ENCODE measurements at regions of chr9 and their contacts with region 1.

Region 1: DNA sequence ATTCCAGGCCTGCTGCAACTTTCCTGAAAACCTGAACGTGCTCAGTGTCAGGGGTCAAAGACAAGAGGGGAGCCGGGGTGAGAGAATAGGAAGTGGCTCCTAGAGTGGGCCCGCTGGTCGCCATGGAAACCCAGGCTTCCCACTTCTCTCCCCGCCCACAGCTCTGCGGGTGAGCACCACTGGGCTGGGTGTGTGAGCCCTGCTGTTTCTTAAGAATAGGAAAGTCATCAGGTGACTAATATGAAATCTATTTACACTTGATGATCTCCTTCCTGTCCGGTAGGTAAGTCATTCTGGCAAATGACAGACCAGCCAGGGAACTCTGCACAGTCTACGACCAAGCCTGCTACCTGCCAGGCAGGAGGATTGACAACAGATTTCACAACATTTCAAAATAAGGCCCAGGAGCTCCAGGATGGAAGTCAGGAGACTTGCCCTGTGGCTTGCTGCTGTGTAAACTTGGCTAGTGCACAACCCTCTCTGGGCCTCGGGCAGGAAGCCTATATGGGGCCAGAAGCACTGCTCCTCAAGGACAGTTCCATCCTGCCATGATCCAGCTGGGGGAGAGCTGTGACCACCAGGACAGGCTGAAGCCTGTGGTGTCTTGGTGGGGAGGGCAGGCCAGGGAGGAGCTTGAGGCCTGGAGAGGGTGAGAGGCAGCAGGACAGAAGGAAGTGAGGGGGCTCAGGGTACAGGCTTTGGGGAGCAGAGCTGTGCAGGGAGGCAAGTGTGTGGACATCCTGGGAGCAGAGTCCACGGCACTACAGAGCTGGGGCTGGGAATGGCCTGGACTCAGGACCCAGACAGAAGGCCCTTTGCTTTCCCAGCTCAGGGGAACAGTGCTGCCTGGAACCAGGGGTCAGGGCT is 60.6 kb downstream of the SHB start:
- DNase-seq: peak in 1 of 5 donors; percentile 72
- ATAC-seq: peak in 3 of 4 donors; percentile 33 to 54 (median 49)
- H3K4me3 ChIP-seq: no peak overlapping the region
- H3K27ac ChIP-seq: peak overlapping the region in 5 of 12 donors; percentile 1 to 72 (median 34)
- H3K4me1 ChIP-seq: peaks cover 0 to 57% (median 35%) of the 10 kb centered on the region in 12 donors
- H3K27me3 ChIP-seq: no peaks in the 10 kb centered on the region
- CTCF ChIP-seq: no peak
- POLR2A ChIP-seq: no peak

Region 2: GRCh38 chr9:37920471-37921167 is 87.8 kb before region 1 on chr9:
- intact Hi-C with region 1: loop called in 3 of 10 experiments (anchors 5 to 10 kb)
- DNase-seq: no peak
- ATAC-seq: no peak
- H3K4me3 ChIP-seq: no peak overlapping the region
- H3K27ac ChIP-seq: no peak overlapping the region
- H3K4me1 ChIP-seq: peaks cover 0 to 52% (median 26%) of the 10 kb centered on the region in 12 donors
- H3K27me3 ChIP-seq: no peaks in the 10 kb centered on the region
- CTCF ChIP-seq: no peak
- POLR2A ChIP-seq: no peak

Region 3: GRCh38 chr9:37963936-37964739 is 44.3 kb before region 1 on chr9:
- intact Hi-C with region 1: loop called in 2 of 10 experiments (anchors 5 to 10 kb)
- DNase-seq: peak in 1 of 5 donors; percentile 55
- ATAC-seq: peak in 3 of 4 donors; percentile 40 to 69 (median 54)
- H3K4me3 ChIP-seq: no peak overlapping the region
- H3K27ac ChIP-seq: peak overlapping the region in 2 of 12 donors; percentile 41 to 46
- H3K4me1 ChIP-seq: peaks cover 0 to 41% (median 20%) of the 10 kb centered on the region in 12 donors
- H3K27me3 ChIP-seq: no peaks in the 10 kb centered on the region
- CTCF ChIP-seq: no peak
- POLR2A ChIP-seq: no peak

Region 4: GRCh38 chr9:38061326-38061977 is 53.1 kb after region 1 on chr9:
- intact Hi-C with region 1: loop called in 3 of 10 experiments (anchors 5 to 10 kb)
- DNase-seq: no peak
- ATAC-seq: no peak
- H3K4me3 ChIP-seq: no peak overlapping the region
- H3K27ac ChIP-seq: peak overlapping the region in 10 of 12 donors; percentile 11 to 96 (median 62)
- H3K4me1 ChIP-seq: peaks cover 7 to 100% (median 77%) of the 10 kb centered on the region in 12 donors
- H3K27me3 ChIP-seq: no peaks in the 10 kb centered on the region
- CTCF ChIP-seq: no peak
- POLR2A ChIP-seq: no peak

Region 5: DNA sequence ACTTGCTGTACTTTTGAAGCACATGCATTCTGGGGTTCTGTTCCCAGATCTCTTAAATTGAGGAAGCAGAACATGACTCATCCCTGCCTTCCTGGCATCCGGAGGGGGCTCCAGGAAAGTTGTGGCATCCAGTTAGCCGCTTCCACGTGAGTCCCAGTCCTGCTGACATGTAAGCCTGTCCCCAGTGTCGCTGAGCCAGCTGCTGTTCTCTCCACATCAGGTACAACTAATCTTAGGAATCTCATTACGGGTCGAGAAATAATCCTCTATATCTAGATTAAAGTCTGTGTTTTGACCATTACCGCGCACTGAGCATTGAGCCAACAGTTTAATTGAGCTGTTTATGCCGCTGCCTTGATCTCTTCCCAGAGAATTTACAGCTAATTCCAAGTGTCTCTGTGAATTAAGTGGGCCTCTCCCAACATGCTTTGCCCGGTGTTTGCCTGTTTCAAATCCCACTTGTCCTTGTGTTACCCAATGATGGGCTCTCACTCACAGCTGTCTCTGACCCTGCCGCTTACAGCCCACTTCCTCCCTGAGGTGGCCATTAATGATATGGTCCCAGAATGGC is 71.1 kb after region 1 on chr9:
- intact Hi-C with region 1: loop called in 1 of 10 experiments (anchors 5 kb)
- DNase-seq: peak in 2 of 5 donors; percentile 25 to 59
- ATAC-seq: peak in 3 of 4 donors; percentile 19 to 51 (median 38)
- H3K4me3 ChIP-seq: no peak overlapping the region
- H3K27ac ChIP-seq: peak overlapping the region in 1 of 12 donors; percentile 33
- H3K4me1 ChIP-seq: peaks cover 0 to 49% (median 11%) of the 10 kb centered on the region in 12 donors
- H3K27me3 ChIP-seq: no peaks in the 10 kb centered on the region
- CTCF ChIP-seq: no peak
- POLR2A ChIP-seq: no peak